ENCODE measurements at regions of chr12 and their contacts with region 1.

Region 1: DNA sequence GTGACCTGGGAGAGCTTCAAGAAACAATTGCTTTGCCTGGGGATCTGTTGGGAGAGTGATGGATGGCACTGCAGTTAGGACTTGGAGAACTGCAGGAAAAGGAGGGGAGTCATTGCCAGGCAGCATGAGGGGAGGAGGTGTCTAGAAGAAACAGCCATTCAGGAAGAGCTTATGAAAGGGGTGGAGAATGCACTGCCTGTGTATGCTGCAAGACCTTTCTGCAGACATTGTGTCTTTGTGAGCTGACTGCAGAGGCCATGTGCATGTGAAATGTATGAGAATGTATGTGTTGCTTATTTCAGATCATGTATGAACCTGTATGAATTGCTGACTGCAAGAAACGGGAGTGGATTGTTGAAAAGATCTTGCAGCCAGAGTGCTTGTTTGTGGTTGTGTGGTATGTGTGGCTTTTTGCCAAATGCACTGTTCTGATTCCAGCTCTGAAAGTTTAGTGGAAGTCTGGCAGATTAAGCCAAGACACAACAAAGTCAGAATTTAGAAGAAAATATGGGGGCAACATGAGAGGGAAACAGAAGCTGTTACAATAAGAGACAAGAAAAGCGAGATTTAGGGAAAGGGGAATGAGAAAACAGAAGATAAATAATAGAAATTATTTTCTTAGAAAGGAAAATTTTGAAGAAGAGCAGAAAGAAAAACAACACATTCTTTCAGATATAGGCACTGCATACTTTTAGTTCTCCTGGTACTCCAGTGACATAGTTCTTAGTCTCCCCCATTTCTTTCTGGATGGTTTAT is 9.8 kb upstream of the RIMKLB start:
- DNase-seq: peak in 1 of 2 donors; percentile 75
- ATAC-seq: peak; percentile 69

Region 2: DNA sequence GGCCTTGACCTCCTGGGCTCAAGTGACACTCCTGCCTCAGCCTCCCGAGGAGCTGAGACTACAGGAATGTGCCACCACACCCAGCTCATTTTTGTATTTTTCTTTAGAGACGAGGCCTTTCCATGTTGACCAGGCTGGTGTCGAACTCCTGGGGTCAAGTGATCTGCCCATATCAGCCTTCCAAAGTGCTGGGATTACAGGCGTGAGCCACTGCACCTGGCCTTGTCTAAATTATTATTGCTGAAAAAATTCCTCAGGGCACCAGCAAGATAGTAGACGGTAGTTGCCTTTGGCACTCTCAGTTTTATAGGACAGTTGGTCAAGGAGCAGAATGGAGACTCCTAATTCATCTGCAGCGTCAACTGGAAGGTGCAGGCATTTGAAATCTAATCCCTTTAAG is 72.8 kb before region 1 on chr12:
- intact Hi-C with region 1: no loop called
- DNase-seq: no peak
- ATAC-seq: no peak

Region 3: GRCh38 chr12:8629486-8630033 is 58.5 kb before region 1 on chr12:
- intact Hi-C with region 1: no loop called
- DNase-seq: no peak
- ATAC-seq: no peak

Region 4: GRCh38 chr12:8742501-8742900 is 54.5 kb after region 1 on chr12:
- intact Hi-C with region 1: no loop called
- DNase-seq: no peak
- ATAC-seq: no peak

Region 5: DNA sequence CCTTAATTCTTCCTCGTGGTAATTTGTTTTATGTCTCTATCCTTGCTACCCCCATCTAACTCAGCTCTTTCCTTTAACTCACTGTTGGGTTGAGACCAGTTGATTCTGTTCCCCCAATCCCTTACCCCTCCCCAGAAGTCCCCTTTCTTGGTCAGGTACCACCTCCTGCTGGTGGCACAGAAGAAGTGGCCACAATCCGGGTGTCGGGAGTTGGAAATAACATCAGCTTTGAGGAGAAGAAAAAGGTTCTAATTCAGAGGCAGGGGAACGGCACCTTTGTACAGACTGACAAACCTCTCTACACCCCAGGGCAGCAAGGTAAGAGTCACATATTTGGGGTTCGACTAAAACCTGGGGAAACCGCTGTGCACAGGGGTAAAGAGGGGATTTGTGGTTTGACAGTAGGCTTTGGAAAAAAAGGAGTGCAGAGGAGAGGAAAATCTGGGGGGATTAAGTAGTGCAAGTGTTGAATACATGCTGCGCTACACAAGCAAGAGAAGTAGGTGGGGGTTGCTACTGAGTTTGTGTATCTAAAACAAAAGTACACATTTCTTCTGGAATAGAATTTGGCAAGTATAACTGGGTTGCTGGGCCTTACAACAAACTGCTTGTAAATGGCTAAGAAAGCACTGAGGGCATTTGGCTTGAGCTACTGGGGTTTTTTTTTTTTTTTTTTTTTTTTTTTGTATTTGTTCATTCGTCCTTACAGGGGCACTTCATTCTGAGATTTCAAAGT is 135.7 kb after region 1 on chr12:
- intact Hi-C with region 1: loop called (anchors 5 to 10 kb)
- DNase-seq: no peak
- ATAC-seq: no peak

Region 6: GRCh38 chr12:8887285-8887715 is 199.3 kb after region 1 on chr12:
- intact Hi-C with region 1: loop called in 1 of 2 experiments (anchors 10 kb)
- DNase-seq: no peak
- ATAC-seq: no peak

Region 7: DNA sequence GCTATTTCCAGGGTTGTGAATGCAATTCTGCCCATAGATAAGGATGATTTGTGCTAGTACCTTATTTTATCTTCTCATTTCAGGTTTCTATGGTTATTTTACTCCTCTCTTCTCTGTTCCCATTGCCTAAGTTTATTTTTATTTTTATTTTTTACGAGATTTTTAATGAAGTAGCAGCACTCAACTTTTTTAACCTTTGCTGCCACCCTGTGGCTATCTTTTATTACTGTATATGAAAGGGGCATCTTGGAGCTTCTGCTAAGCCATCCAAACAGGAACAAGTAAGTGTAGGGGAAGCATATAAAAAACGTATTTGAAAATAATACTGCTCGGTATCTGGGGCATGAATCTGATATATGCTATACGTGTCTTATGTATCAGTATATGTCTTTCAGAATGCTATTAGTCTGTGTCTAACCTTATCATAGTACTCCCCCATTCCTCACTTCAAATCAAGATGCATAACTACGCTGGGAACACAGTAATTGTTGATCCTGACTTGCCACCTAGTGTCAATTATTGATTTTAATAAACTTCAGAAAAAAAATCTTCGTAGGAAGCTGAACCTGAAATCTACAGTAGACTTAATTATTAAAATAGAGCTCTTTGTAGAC is 361.6 kb after region 1 on chr12:
- intact Hi-C with region 1: loop called in 1 of 2 experiments (anchors 10 kb)
- DNase-seq: no peak
- ATAC-seq: peak; percentile 44